Caco-2 (cell line): ENCODE measurements at regions of chr2 and their contacts with region 1.

Region 1: GRCh38 chr2:69914170-69914960 is 544 bp upstream of the MXD1 start:
- DNase-seq: peak; percentile 100
- H3K4me3 ChIP-seq: peak overlapping the region; percentile 74
- H3K4me3 Mint-ChIP-seq: peak overlapping the region; percentile 82
- H3K27ac Mint-ChIP-seq: peak overlapping the region; percentile 82
- H3K4me1 ChIP-seq: no peaks in the 10 kb centered on the region
- H3K4me1 Mint-ChIP-seq: peaks cover 4% of the 10 kb centered on the region
- H3K27me3 ChIP-seq: no peaks in the 10 kb centered on the region
- H3K27me3 Mint-ChIP-seq: no peaks in the 10 kb centered on the region
- CTCF ChIP-seq: peak in 1 of 2 experiments; percentile 33

Region 2: GRCh38 chr2:69811018-69811417 is 103.3 kb before region 1 on chr2:
- CTCF ChIA-PET with region 1: no interaction called
- POLR2A ChIA-PET with region 1: no interaction called
- intact Hi-C with region 1: no loop called
- DNase-seq: no peak
- H3K4me3 ChIP-seq: no peak overlapping the region
- H3K4me3 Mint-ChIP-seq: no peak overlapping the region
- H3K27ac Mint-ChIP-seq: no peak overlapping the region
- H3K4me1 ChIP-seq: no peaks in the 10 kb centered on the region
- H3K4me1 Mint-ChIP-seq: no peaks in the 10 kb centered on the region
- H3K27me3 ChIP-seq: no peaks in the 10 kb centered on the region
- H3K27me3 Mint-ChIP-seq: no peaks in the 10 kb centered on the region
- CTCF ChIP-seq: no peak

Region 3: GRCh38 chr2:69893684-69894551 is 20.4 kb before region 1 on chr2 and contains the start of gene SNRNP27:
- CTCF ChIA-PET with region 1: interaction called, 8 read pairs
- POLR2A ChIA-PET with region 1: interaction called, 16 read pairs
- intact Hi-C with region 1: no loop called
- DNase-seq: peak; percentile 77 to 81
- H3K4me3 ChIP-seq: peak within 1 kb of the TSS; percentile 51
- H3K4me3 Mint-ChIP-seq: peak within 1 kb of the TSS; percentile 87
- H3K27ac Mint-ChIP-seq: peak within 1 kb of the TSS; percentile 93
- H3K4me1 ChIP-seq: no peaks in the 10 kb centered on the region; the same call in 1 of the 2 replicates
- H3K4me1 Mint-ChIP-seq: peaks cover 7% of the 10 kb centered on the region
- H3K27me3 ChIP-seq: no peaks in the 10 kb centered on the region
- H3K27me3 Mint-ChIP-seq: no peaks in the 10 kb centered on the region
- CTCF ChIP-seq: no peak
- total RNA-seq, gene SNRNP27: 49.3 and 49.7 TPM in 2 replicates

Region 4: GRCh38 chr2:70070541-70071268 is 156.3 kb after region 1 on chr2:
- CTCF ChIA-PET with region 1: interaction called, 69 read pairs
- POLR2A ChIA-PET with region 1: interaction called, 35 read pairs
- intact Hi-C with region 1: loop called (anchors 1 kb)
- DNase-seq: peak; percentile 76 to 79
- H3K4me3 ChIP-seq: no peak overlapping the region
- H3K4me3 Mint-ChIP-seq: no peak overlapping the region
- H3K27ac Mint-ChIP-seq: peak overlapping the region; percentile 38
- H3K4me1 ChIP-seq: peaks cover 14% of the 10 kb centered on the region
- H3K4me1 Mint-ChIP-seq: peaks cover 13% of the 10 kb centered on the region
- H3K27me3 ChIP-seq: no peaks in the 10 kb centered on the region
- H3K27me3 Mint-ChIP-seq: no peaks in the 10 kb centered on the region
- CTCF ChIP-seq: peak; percentile 79 to 91

Region 5: DNA sequence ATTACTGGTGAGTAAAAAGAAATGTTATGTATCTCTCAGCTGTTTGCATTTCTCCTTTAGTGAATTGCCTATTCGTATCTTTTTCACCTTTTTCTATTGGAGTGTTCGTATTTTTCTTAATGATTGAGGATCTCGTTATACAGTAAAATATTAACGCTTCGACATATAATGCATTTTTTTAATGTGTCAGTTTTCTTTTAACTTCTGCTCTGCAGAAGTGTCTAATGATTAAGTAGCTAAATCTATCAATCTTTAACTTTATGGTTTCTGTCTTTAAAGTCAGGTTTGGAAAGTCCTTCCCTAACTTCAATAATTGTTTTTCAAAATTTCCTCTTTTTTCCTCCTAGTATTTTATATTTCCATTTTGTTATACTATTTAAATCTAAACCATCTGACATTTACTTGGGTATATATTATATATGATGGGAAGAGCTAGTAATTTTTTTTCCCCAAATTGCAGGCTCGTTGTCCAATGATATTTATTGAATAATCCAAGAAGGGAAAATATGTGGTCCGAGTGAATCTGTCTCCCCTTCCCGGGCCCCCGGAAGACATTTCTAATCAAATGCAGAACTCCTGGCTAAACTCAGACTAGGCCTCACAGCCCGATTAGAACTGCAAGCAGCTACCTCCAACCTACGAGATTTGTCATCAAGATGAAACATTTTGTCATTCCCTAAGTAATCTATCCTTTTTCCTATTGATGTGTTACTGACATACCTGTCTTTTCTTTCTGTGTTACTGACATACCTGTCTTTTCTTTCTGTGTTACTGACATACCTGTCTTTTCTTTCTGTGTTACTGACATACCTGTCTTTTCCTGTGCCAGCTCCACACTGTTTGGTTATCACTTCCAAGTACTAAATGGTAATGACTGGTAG is 190.1 kb after region 1 on chr2:
- CTCF ChIA-PET with region 1: interaction called, 4 read pairs
- POLR2A ChIA-PET with region 1: interaction called, 17 read pairs
- intact Hi-C with region 1: no loop called
- DNase-seq: peak; percentile 66 to 68
- H3K4me3 ChIP-seq: no peak overlapping the region
- H3K4me3 Mint-ChIP-seq: peak overlapping the region; percentile 47
- H3K27ac Mint-ChIP-seq: peak overlapping the region; percentile 68
- H3K4me1 ChIP-seq: peaks cover 30% of the 10 kb centered on the region
- H3K4me1 Mint-ChIP-seq: peaks cover 20% of the 10 kb centered on the region
- H3K27me3 ChIP-seq: no peaks in the 10 kb centered on the region
- H3K27me3 Mint-ChIP-seq: no peaks in the 10 kb centered on the region
- CTCF ChIP-seq: no peak

Region 6: DNA sequence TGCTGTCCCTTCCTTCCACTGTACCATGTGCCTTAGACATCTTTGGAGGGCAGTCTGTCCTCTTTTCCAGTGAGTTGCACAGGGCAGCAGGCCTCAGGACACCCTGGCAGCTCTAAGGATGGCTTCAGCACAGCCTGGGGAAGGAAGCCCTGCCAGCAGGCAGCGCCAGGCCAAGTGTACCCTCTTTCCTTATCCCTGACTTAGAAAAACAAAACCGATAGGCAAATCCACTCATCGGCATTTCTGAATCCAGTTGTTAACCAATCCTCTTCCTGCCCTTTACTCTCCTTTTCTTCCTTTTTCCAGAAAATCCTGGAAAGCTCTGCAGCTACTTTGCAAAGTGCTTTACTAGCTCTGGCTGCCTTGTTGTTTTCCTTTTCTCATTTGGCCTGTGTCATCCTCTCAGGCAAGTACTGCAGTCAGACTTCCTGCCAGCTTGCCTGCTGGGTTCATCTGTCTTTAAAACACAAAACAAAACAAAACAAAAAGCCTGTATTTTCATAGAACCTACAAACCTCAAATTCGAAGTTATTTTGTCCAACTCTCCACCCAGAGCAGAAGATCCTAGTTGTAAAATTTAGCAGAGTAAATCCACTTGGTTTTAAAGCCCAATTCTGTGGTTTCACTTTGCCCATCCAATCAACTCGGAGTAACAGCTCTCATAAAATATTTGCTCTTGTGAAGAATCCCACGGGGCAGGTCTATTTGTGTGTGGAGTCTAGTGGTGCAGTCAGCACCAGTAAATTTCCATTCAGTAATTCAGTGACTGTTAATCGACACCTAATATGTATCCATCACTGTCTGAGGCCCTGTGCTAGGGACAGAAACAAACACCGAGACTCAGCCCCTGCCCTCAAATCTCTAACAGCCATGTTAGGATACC is 218.1 kb after region 1 on chr2:
- CTCF ChIA-PET with region 1: interaction called, 4 read pairs
- POLR2A ChIA-PET with region 1: interaction called, 14 read pairs
- intact Hi-C with region 1: no loop called
- DNase-seq: peak in 1 of 2 experiments; percentile 61
- H3K4me3 ChIP-seq: peak overlapping the region; percentile 26
- H3K4me3 Mint-ChIP-seq: peak overlapping the region; percentile 68
- H3K27ac Mint-ChIP-seq: peak overlapping the region; percentile 87
- H3K4me1 ChIP-seq: peaks cover 57% of the 10 kb centered on the region
- H3K4me1 Mint-ChIP-seq: peaks cover 50% of the 10 kb centered on the region
- H3K27me3 ChIP-seq: no peaks in the 10 kb centered on the region
- H3K27me3 Mint-ChIP-seq: no peaks in the 10 kb centered on the region
- CTCF ChIP-seq: no peak

Region 7: DNA sequence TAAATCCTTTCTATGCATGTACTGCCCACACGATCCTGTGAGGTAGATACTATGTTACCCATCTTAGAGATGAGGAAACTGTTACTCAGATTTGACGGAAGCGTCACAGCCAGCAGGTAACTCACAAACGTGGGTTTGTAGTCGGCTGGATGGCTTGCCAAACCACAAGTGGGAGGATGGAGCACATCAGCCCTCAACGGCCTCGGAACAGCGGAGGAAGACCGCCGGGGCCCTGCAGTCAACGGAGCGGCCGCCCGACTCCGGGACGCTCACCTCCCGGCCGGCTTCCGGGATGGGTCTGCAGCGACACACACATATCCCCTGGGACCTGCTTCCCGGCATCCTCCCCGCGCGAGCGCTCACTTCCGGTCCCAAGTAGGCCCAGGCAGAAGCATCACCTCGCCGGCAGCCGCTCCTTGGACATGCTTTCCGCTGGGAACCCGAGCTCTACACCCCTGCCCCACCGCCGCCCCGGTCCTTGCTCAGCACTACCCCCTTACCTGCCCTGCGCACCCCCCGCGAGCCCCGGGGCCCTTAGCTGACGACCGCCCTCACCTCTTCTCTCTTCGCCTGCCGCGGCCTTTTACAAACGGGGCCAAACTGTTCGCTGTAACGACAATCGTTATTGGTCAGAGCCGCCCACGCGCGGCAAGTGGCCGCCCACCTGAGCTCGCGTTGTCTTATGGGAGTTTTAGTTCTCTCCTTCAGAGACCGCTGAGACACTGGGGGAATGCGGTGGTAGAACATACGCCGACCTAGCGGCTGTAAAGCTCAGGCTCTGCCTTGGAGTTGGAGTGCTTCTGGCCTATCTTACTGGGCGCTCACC is 276.3 kb after region 1 on chr2 and contains the start of gene C2orf42:
- CTCF ChIA-PET with region 1: interaction called, 9 read pairs
- POLR2A ChIA-PET with region 1: interaction called, 24 read pairs
- intact Hi-C with region 1: loop called (anchors 1 kb)
- DNase-seq: peak; percentile 97 to 98
- H3K4me3 ChIP-seq: peak within 1 kb of the TSS; percentile 95
- H3K4me3 Mint-ChIP-seq: peak within 1 kb of the TSS; percentile 90
- H3K27ac Mint-ChIP-seq: peak within 1 kb of the TSS; percentile 97
- H3K4me1 ChIP-seq: 0 out of 2 replicates have a peak, but pooled peaks cover 6% of the 10 kb centered on the region
- H3K4me1 Mint-ChIP-seq: peaks cover 10% of the 10 kb centered on the region
- H3K27me3 ChIP-seq: no peaks in the 10 kb centered on the region
- H3K27me3 Mint-ChIP-seq: no peaks in the 10 kb centered on the region
- CTCF ChIP-seq: peak in 1 of 2 experiments; percentile 21
- total RNA-seq, gene C2orf42: 12.7 and 14.8 TPM in 2 replicates

Region 8: GRCh38 chr2:70301344-70302194 is 387.2 kb after region 1 on chr2 and contains the start of gene FAM136A:
- CTCF ChIA-PET with region 1: no interaction called
- POLR2A ChIA-PET with region 1: interaction called, 3 read pairs
- intact Hi-C with region 1: loop called (anchors 1 kb)
- DNase-seq: peak; percentile 91 to 98
- H3K4me3 ChIP-seq: peak within 1 kb of the TSS; percentile 99
- H3K4me3 Mint-ChIP-seq: peak within 1 kb of the TSS; percentile 96
- H3K27ac Mint-ChIP-seq: peak within 1 kb of the TSS; percentile 95
- H3K4me1 ChIP-seq: peaks cover 5% of the 10 kb centered on the region
- H3K4me1 Mint-ChIP-seq: no peaks in the 10 kb centered on the region
- H3K27me3 ChIP-seq: no peaks in the 10 kb centered on the region
- H3K27me3 Mint-ChIP-seq: no peaks in the 10 kb centered on the region
- CTCF ChIP-seq: peak; percentile 94 to 95
- total RNA-seq, gene FAM136A: 115 and 120 TPM in 2 replicates